ENCODE measurements at regions of chr1 and their contacts with region 1.

Region 1: GRCh38 chr1:167220537-167221125 is at the start of gene POU2F1:
- DNase-seq: peak; percentile 97 to 100 (median 99)
- ATAC-seq: peak; percentile 78
- H3K4me3 ChIP-seq: peak within 1 kb of the TSS; percentile 89 to 96
- H3K4me3 Mint-ChIP-seq: peak within 1 kb of the TSS; percentile 97
- H3K27ac ChIP-seq: peak within 1 kb of the TSS; percentile 80 to 91
- H3K27ac Mint-ChIP-seq: peak within 1 kb of the TSS; percentile 96
- H3K4me1 ChIP-seq: peaks cover 23% of the 10 kb centered on the region
- H3K4me1 Mint-ChIP-seq: peaks cover 40% of the 10 kb centered on the region
- H3K27me3 ChIP-seq: no peaks in the 10 kb centered on the region
- H3K27me3 Mint-ChIP-seq: no peaks in the 10 kb centered on the region
- CTCF ChIP-seq: peak; percentile 45
- total RNA-seq, gene POU2F1: 18.5 to 23.9 TPM

Region 2: DNA sequence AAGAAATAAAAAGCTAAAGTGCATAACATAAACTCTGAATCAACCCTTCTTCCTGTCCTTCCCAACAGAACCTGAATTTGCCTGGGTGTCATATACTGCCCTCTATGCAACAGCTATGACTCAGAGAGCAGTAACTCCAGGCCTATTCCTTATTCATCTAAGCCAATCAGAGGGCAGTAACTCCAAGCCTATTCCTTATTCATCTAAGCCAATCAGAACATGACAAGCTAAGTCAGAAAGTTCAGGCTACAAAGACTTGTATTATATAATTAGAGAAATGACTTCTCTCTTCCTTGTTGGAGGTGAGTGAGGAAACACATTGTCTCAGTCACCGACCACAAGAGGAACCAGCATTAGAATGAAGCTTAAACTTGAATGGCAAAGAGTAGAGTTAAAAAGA is 318.4 kb before region 1 on chr1:
- CTCF ChIA-PET with region 1: no interaction called
- POLR2A ChIA-PET with region 1: no interaction called
- intact Hi-C with region 1: loop called in 1 of 2 experiments (anchors 10 kb)
- DNase-seq: peak in 1 of 9 experiments; percentile 20
- ATAC-seq: no peak
- H3K4me3 ChIP-seq: no peak overlapping the region
- H3K4me3 Mint-ChIP-seq: no peak overlapping the region
- H3K27ac ChIP-seq: no peak overlapping the region
- H3K27ac Mint-ChIP-seq: no peak overlapping the region
- H3K4me1 ChIP-seq: no peaks in the 10 kb centered on the region
- H3K4me1 Mint-ChIP-seq: no peaks in the 10 kb centered on the region
- H3K27me3 ChIP-seq: no peaks in the 10 kb centered on the region
- H3K27me3 Mint-ChIP-seq: peaks cover 8% of the 10 kb centered on the region
- CTCF ChIP-seq: no peak

Region 3: DNA sequence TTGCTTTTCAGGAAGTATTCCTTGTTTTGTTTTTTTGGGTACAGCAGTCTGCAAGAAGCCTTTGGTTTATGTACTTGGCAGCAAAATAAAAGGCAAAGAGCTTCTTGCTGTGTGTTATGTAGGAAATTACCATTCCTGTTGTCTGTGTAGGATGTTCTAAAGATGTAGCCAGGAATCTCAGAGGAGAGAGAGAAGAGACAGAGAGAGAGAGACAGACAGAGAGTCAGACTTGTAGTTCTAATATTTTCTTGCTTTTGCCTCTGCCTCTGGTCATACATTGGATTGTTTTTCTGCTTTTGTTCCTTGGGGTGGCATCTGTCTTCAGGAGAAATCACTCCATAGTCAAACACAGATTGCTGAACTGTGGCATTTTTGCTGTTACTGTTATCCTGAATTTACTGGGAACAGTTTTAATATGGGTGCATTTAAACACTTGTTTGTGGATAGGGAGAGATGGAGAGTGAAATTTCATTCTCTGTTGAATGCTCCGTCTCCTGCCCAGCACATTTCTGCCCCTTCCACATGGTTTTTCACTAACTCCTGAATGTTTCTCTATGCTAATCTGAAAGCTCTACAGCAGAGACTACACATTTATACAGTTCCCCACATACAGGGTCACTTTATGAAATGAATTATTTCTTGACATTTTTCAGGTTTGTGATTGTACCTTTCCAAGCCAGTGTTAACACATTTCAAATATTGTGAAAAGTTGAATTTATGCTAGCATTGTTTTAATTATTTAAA is 49.9 kb after region 1 on chr1:
- CTCF ChIA-PET with region 1: interaction called, 5 read pairs
- POLR2A ChIA-PET with region 1: interaction called, 10 read pairs
- intact Hi-C with region 1: loop called in 1 of 2 experiments (anchors 2 kb)
- DNase-seq: no peak
- ATAC-seq: no peak
- H3K4me3 ChIP-seq: no peak overlapping the region
- H3K4me3 Mint-ChIP-seq: no peak overlapping the region
- H3K27ac ChIP-seq: no peak overlapping the region
- H3K27ac Mint-ChIP-seq: no peak overlapping the region
- H3K4me1 ChIP-seq: peaks cover 9% of the 10 kb centered on the region
- H3K4me1 Mint-ChIP-seq: peaks cover 43% of the 10 kb centered on the region
- H3K27me3 ChIP-seq: no peaks in the 10 kb centered on the region
- H3K27me3 Mint-ChIP-seq: no peaks in the 10 kb centered on the region
- CTCF ChIP-seq: no peak

Region 4: GRCh38 chr1:167297222-167298214 is 76.9 kb after region 1 on chr1:
- CTCF ChIA-PET with region 1: no interaction called
- POLR2A ChIA-PET with region 1: no interaction called
- intact Hi-C with region 1: no loop called
- DNase-seq: no peak
- ATAC-seq: no peak
- H3K4me3 ChIP-seq: no peak overlapping the region
- H3K4me3 Mint-ChIP-seq: no peak overlapping the region
- H3K27ac ChIP-seq: no peak overlapping the region
- H3K27ac Mint-ChIP-seq: no peak overlapping the region
- H3K4me1 ChIP-seq: no peaks in the 10 kb centered on the region
- H3K4me1 Mint-ChIP-seq: peaks cover 14% of the 10 kb centered on the region
- H3K27me3 ChIP-seq: no peaks in the 10 kb centered on the region
- H3K27me3 Mint-ChIP-seq: no peaks in the 10 kb centered on the region
- CTCF ChIP-seq: no peak

Region 5: DNA sequence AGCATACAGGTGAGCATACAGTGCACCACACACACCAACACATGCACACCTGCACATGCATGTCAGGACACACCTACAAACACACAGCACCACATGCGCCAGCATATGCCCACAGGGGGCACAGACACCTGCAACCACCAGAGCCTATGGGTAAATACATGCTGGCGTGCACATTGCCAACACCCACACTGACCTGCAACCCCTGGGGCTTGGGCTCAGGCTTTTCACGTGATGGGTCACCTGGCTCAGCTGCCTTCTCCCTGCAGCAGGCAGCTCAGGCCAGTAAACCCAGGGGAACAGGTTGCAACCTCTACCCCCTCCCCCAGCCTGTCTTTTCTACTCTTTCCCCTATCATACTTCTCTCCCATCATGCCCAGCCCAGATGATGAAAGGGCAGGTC is 289.6 kb after region 1 on chr1:
- CTCF ChIA-PET with region 1: no interaction called
- POLR2A ChIA-PET with region 1: no interaction called
- intact Hi-C with region 1: loop called in 1 of 2 experiments (anchors 2 kb)
- DNase-seq: peak in 2 of 9 experiments; percentile 42 to 49
- ATAC-seq: peak; percentile 16
- H3K4me3 ChIP-seq: no peak overlapping the region
- H3K4me3 Mint-ChIP-seq: peak overlapping the region; percentile 78
- H3K27ac ChIP-seq: peak overlapping the region in 1 of 2 experiments; percentile 45
- H3K27ac Mint-ChIP-seq: peak overlapping the region; percentile 85
- H3K4me1 ChIP-seq: peaks cover 77% of the 10 kb centered on the region
- H3K4me1 Mint-ChIP-seq: peaks cover 90% of the 10 kb centered on the region
- H3K27me3 ChIP-seq: no peaks in the 10 kb centered on the region
- H3K27me3 Mint-ChIP-seq: no peaks in the 10 kb centered on the region
- CTCF ChIP-seq: no peak

Region 6: DNA sequence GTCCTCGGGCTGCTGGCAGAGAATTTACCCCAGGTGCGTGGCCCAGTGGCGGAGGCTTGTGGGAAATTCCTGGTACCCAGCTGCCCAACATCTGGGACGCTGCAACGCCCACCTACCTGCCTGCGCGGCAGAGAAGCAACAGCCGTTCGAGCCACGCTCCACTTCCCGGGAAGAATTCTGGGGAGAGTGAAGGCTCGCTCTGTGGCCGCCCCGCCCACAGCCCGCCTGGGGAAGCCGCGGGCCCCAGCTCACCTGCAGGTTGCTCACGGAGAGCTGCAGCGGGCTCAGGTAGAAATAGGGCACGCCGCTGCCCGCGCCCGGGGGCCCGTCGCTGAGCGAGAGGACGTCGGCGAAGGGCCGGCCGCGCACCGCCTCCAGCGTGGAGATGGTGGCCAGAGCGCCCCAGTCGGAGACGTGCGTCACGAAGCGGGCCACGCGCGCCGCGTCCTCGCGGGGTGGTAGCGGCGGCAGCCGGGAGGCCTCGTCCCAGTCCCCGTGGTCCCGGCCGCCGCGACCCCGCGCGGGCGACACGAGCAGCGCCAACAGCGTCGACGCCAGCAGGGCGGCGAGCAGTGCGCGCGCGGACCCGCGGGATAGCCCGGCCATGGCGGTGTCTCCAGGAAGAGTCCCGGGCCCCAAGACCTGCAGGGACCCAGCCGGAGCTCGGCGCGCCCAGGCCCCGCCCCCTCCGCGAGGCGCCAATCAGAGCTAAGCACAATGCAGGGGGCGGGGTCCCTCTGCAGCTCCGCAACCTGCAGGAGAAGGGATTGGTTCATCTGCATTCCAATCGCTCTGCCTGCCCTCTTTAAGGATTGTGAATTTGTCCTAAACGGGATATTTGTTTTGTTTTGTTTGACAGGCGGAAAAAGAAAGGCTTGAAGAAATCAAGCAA is 332.8 kb after region 1 on chr1 and contains the start of gene CREG1:
- CTCF ChIA-PET with region 1: interaction called, 6 read pairs
- POLR2A ChIA-PET with region 1: interaction called, 5 read pairs
- intact Hi-C with region 1: loop called (anchors 1 to 5 kb)
- DNase-seq: peak; percentile 70 to 93 (median 88)
- ATAC-seq: peak; percentile 97
- H3K4me3 ChIP-seq: peak within 1 kb of the TSS; percentile 62 to 70
- H3K4me3 Mint-ChIP-seq: peak within 1 kb of the TSS; percentile 88
- H3K27ac ChIP-seq: peak within 1 kb of the TSS in 1 of 2 experiments; percentile 57
- H3K27ac Mint-ChIP-seq: no peak within 1 kb of the TSS
- H3K4me1 ChIP-seq: peaks cover 18% of the 10 kb centered on the region
- H3K4me1 Mint-ChIP-seq: peaks cover 47% of the 10 kb centered on the region
- H3K27me3 ChIP-seq: no peaks in the 10 kb centered on the region
- H3K27me3 Mint-ChIP-seq: no peaks in the 10 kb centered on the region
- CTCF ChIP-seq: no peak
- total RNA-seq, gene CREG1: 9.3 to 9.8 TPM

Region 7: DNA sequence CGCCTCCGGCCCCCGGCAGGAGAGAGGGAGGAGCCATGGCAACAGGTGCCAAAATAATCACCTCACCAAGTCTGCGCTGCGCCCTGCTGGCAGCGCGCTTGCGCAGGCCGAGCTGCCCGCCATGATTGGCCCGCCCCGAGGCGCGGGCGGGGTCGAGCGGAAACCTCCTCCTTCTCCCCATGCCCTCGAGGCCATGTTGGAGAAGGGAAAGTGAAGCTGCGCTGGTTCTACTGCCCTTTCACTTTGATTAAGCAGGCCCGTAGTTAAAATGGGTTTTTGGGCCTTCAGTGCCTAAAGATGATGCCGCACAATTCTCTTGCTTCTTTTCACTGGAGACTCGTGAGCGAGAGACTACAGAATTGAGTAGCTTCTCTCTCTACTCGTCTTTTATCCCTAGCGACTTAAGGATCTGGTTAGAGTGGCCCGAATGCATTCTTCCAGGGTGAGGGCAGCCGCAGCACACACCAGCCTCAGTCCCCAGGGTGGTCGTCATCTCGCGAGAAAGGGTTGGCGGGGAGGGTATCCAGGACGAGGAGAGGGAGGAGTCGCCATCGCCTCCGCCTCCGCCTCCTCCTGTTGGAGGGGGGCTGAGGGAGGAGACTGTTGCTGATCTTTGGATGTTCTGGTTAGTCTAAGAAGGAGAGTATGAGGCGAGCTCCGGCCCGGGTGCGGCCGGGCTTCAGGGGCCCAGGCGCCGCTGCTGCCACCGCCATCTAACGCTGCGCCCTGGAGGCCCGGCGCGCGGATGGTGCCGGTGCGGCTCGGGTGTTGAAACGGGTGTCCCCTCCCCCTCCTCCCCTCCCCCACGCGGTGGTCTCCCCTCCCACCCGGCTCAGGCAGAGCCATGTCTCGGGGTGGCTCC is 715.7 kb after region 1 on chr1 and contains the start of gene DCAF6:
- CTCF ChIA-PET with region 1: no interaction called
- POLR2A ChIA-PET with region 1: interaction called, 4 read pairs
- intact Hi-C with region 1: loop called (anchors 1 to 5 kb)
- DNase-seq: peak; percentile 93 to 100 (median 97)
- ATAC-seq: peak; percentile 78
- H3K4me3 ChIP-seq: peak within 1 kb of the TSS; percentile 85 to 86
- H3K4me3 Mint-ChIP-seq: peak within 1 kb of the TSS; percentile 89
- H3K27ac ChIP-seq: peak within 1 kb of the TSS; percentile 91 to 96
- H3K27ac Mint-ChIP-seq: peak within 1 kb of the TSS; percentile 93
- H3K4me1 ChIP-seq: peaks cover 29% of the 10 kb centered on the region
- H3K4me1 Mint-ChIP-seq: peaks cover 54% of the 10 kb centered on the region
- H3K27me3 ChIP-seq: no peaks in the 10 kb centered on the region
- H3K27me3 Mint-ChIP-seq: no peaks in the 10 kb centered on the region
- CTCF ChIP-seq: no peak
- total RNA-seq, gene DCAF6: 12.4 to 13.0 TPM